Prostate gland (tissue), 2 donors: ENCODE measurements at regions of chr14 and their contacts with region 1.

Region 1: DNA sequence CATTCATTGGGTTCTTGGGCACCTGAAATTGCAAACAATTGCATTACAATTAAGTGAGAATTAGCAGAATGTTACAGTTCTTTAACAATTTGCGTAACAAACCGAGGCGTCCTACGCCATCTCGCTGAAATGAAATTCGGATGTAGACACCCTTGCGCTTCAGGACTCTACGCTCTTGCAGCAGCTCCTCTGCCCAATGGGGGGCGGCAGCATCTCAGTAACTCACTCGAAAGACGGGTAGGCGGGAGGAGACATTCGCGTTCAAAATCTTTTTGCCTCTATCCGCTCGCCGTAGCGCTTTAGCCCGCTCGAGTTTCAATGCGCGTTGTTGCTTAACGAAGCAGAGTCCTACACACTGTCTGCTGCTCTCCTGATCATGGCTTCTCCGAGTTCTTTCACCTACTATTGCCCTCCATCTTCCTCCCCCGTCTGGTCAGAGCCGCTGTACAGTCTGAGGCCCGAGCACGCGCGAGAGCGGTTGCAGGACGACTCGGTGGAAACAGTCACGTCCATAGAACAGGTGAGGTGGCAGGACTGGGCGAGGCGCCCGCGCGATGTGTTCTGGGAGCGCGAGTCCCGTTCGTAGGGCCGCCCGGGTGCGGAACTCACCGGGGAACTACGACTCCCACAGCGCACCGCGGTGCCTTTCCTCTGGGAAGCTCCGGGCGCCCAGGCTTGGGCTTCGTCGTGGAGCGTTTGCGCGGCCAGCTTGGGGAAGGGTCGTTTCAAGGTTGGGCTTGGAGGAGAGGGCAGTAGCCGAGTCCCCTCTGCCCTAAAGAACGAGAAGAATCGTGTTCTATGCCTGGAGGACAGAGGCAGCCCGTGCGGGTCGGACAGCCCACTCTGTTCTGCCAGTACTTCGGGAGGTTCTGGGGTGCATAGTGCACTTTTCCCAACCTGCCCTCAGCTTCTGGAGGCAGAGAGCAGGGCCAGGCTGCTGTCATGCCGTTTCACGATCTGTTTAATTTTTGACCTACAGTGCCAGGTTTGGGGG is at the start of gene FNTB:
- DNase-seq: peak; percentile 97
- H3K4me3 ChIP-seq: peak within 1 kb of the TSS; percentile 62 to 64
- H3K27ac ChIP-seq: peak within 1 kb of the TSS; percentile 82 to 89
- H3K4me1 ChIP-seq: no peaks in the 10 kb centered on the region
- H3K27me3 ChIP-seq: no peaks in the 10 kb centered on the region
- CTCF ChIP-seq: peak; percentile 50 to 98 (median 91)
- POLR2A ChIP-seq: peak; percentile 74
- total RNA-seq, gene FNTB: 23.5 to 46.2 TPM

Region 2: DNA sequence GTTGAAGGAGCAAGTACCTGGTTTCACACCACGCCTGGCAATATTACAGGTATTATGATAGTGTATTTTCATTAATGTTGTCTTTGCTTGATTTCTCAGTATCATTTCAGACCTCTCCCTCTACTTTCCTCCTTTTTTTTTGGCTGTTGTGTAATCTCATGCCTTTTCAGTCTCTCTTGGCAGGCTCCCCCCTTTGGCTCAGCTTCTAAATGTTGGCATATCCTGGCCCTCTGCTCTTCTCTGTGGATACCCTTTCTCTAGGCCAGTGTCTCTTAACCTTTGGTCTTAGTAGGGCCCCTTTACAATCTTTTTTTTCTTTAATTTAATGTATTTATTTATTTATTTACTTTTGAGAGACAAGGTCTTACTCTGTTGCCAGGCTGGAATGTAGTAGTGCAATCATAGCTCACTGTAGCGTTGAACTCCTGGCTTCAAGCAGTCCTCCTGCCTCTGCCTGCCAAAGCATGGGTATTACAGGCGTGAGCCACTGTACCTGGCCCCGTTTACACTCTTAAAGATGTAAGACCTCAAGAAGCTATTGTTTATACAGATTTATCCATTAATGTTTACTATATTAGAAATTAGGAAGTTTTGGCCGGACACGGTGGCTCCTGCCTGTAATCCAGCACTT is 585.9 kb before region 1 on chr14:
- intact Hi-C with region 1: no loop called
- DNase-seq: no peak
- H3K4me3 ChIP-seq: no peak overlapping the region
- H3K27ac ChIP-seq: no peak overlapping the region
- H3K4me1 ChIP-seq: no peaks in the 10 kb centered on the region
- H3K27me3 ChIP-seq: no peaks in the 10 kb centered on the region
- CTCF ChIP-seq: no peak
- POLR2A ChIP-seq: no peak

Region 3: GRCh38 chr14:64823305-64823861 is 163.5 kb before region 1 on chr14:
- intact Hi-C with region 1: loop called (anchors 5 kb)
- DNase-seq: peak; percentile 63
- H3K4me3 ChIP-seq: no peak overlapping the region
- H3K27ac ChIP-seq: no peak overlapping the region
- H3K4me1 ChIP-seq: no peaks in the 10 kb centered on the region
- H3K27me3 ChIP-seq: no peaks in the 10 kb centered on the region
- CTCF ChIP-seq: peak; percentile 49 to 91 (median 68)
- POLR2A ChIP-seq: no peak

Region 4: DNA sequence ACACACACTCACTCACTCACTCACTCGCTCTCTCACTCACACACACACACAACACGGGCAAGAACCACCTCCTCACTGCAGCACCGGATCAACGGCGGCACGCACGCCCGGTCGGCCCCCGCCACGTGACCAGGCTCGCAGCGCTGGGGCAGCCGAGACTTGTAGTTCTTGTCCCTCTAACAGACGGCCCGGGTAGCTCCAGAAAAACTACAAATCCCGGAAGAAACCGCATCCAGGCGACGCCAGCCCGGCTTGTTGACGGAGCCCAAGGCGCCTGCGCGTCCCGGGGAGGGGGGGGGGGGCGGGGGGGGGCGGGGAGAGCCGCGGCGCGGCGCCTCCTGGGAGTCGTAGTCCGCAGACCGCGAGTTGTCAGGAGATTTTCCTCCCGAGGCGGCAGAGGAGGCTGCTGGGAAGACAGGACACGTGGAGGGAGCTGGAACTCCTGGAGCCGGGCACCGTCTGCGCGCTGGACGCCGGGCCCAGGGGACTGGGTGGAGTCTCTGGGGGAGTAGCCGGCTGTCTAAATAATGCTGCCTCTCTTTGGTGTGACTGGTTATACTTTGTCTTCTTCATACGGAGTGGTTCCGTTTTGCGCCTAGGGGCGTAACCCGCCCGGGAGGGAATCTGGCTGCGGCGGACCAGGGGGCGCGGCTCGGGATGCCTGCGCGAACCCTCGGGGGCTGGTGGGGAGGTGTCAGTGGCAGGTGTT is 115.7 kb after region 1 on chr14 and contains the start of gene MAX:
- intact Hi-C with region 1: loop called (anchors 2 kb)
- DNase-seq: peak; percentile 99
- H3K4me3 ChIP-seq: peak within 1 kb of the TSS; percentile 91 to 96
- H3K27ac ChIP-seq: peak within 1 kb of the TSS; percentile 86 to 90
- H3K4me1 ChIP-seq: peaks cover 8% of the 10 kb centered on the region
- H3K27me3 ChIP-seq: no peaks in the 10 kb centered on the region
- CTCF ChIP-seq: no peak
- POLR2A ChIP-seq: peak; percentile 93
- total RNA-seq, gene MAX: 73.2 to 79.0 TPM

Region 5: GRCh38 chr14:65156568-65157366 is 169.9 kb after region 1 on chr14:
- intact Hi-C with region 1: loop called (anchors 5 kb)
- DNase-seq: no peak
- H3K4me3 ChIP-seq: no peak overlapping the region
- H3K27ac ChIP-seq: peak overlapping the region; percentile 4 to 75
- H3K4me1 ChIP-seq: no peaks in the 10 kb centered on the region
- H3K27me3 ChIP-seq: no peaks in the 10 kb centered on the region
- CTCF ChIP-seq: no peak
- POLR2A ChIP-seq: no peak

Region 6: GRCh38 chr14:65412032-65412846 is 425.4 kb after region 1 on chr14 and contains the start of gene FUT8:
- intact Hi-C with region 1: loop called (anchors 5 kb)
- DNase-seq: peak; percentile 95
- H3K4me3 ChIP-seq: peak within 1 kb of the TSS; percentile 61 to 81
- H3K27ac ChIP-seq: peak within 1 kb of the TSS; percentile 86 to 91
- H3K4me1 ChIP-seq: no peaks in the 10 kb centered on the region
- H3K27me3 ChIP-seq: no peaks in the 10 kb centered on the region
- CTCF ChIP-seq: peak in 3 of 4 experiments; percentile 65 to 81 (median 68)
- POLR2A ChIP-seq: peak; percentile 80
- total RNA-seq, gene FUT8: 12.4 to 27.9 TPM